ENCODE measurements at regions of chr6 and their contacts with region 1.

Region 1: DNA sequence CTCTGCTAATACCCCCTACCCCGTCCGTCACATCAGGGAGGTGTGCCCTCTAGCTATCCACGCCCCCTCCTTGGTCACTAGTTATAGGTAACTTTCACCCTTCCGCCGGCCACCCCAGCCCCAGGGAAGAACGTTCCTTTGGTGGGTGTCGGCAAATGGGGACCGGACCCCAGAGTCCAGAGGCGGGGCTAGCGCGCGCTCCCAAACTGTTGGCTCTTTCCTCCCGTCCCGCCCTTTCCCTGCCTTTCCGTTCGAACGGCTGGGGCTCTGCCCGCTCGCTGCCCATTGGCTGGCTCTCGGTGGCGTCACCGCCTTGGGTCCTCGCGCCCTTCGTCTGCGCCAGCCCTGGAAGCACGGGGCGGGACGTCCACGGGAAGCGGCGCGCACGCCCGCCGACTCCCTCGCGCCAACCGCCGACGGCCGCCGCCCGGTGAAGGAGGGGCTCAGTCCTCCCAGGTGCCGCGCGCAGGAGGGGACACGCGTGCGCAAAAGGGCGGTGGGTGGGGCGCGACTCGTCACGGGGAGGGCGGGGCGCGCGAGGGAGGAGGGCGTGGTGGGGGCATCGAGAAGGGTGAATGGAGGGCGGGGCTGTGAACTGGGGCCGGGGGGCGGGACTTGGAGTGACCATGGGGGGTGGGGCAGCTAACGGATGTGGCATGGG is 634 bp upstream of the PHF1 start:
- DNase-seq: peak; percentile 98
- ATAC-seq: peak; percentile 74
- H3K4me3 ChIP-seq: peak overlapping the region; percentile 63 to 91 (median 84)
- H3K4me3 Mint-ChIP-seq: peak overlapping the region; percentile 87
- H3K27ac ChIP-seq: peak overlapping the region; percentile 96 to 98
- H3K27ac Mint-ChIP-seq: peak overlapping the region; percentile 94
- H3K4me1 ChIP-seq: peaks cover 37 to 52% of the 10 kb centered on the region in 2 donors
- H3K4me1 Mint-ChIP-seq: peaks cover 47% of the 10 kb centered on the region
- H3K27me3 ChIP-seq: no peaks in the 10 kb centered on the region
- H3K27me3 Mint-ChIP-seq: no peaks in the 10 kb centered on the region
- CTCF ChIP-seq: no peak

Region 2: GRCh38 chr6:32952817-32953739 is 457.1 kb before region 1 on chr6 and contains the start of gene HLA-DMA:
- CTCF ChIA-PET with region 1: no interaction called
- POLR2A ChIA-PET with region 1: no interaction called
- intact Hi-C with region 1: no loop called
- DNase-seq: peak; percentile 97
- ATAC-seq: peak; percentile 91
- H3K4me3 ChIP-seq: peak within 1 kb of the TSS; percentile 72 to 98 (median 93)
- H3K4me3 Mint-ChIP-seq: peak within 1 kb of the TSS; percentile 96
- H3K27ac ChIP-seq: peak within 1 kb of the TSS; percentile 91 to 92
- H3K27ac Mint-ChIP-seq: peak within 1 kb of the TSS; percentile 98
- H3K4me1 ChIP-seq: peaks cover 70 to 84% of the 10 kb centered on the region in 2 donors
- H3K4me1 Mint-ChIP-seq: peaks cover 85% of the 10 kb centered on the region
- H3K27me3 ChIP-seq: no peaks in the 10 kb centered on the region
- H3K27me3 Mint-ChIP-seq: no peaks in the 10 kb centered on the region
- CTCF ChIP-seq: peak; percentile 88
- total RNA-seq, gene HLA-DMA: 554 and 558 TPM in 2 replicates

Region 3: GRCh38 chr6:33299237-33299944 is 110.8 kb before region 1 on chr6:
- CTCF ChIA-PET with region 1: no interaction called
- POLR2A ChIA-PET with region 1: interaction called, 11 read pairs
- intact Hi-C with region 1: loop called (anchors 2 kb)
- DNase-seq: peak; percentile 95
- ATAC-seq: peak; percentile 68
- H3K4me3 ChIP-seq: peak overlapping the region; percentile 71 to 96 (median 79)
- H3K4me3 Mint-ChIP-seq: peak overlapping the region; percentile 99
- H3K27ac ChIP-seq: peak overlapping the region; percentile 86 to 91
- H3K27ac Mint-ChIP-seq: peak overlapping the region; percentile 99
- H3K4me1 ChIP-seq: peaks cover 12 to 24% of the 10 kb centered on the region in 2 donors
- H3K4me1 Mint-ChIP-seq: peaks cover 38% of the 10 kb centered on the region
- H3K27me3 ChIP-seq: no peaks in the 10 kb centered on the region
- H3K27me3 Mint-ChIP-seq: no peaks in the 10 kb centered on the region
- CTCF ChIP-seq: peak; percentile 69

Region 4: GRCh38 chr6:33425668-33426577 is 15.7 kb after region 1 on chr6:
- CTCF ChIA-PET with region 1: interaction called, 6 read pairs
- POLR2A ChIA-PET with region 1: interaction called, 11 read pairs
- intact Hi-C with region 1: loop called (anchors 1 kb)
- DNase-seq: peak; percentile 83
- ATAC-seq: peak; percentile 59
- H3K4me3 ChIP-seq: peak overlapping the region; percentile 48 to 79 (median 62)
- H3K4me3 Mint-ChIP-seq: peak overlapping the region; percentile 92
- H3K27ac ChIP-seq: peak overlapping the region; percentile 78 to 86
- H3K27ac Mint-ChIP-seq: peak overlapping the region; percentile 91
- H3K4me1 ChIP-seq: peaks cover 50 to 56% of the 10 kb centered on the region in 2 donors
- H3K4me1 Mint-ChIP-seq: peaks cover 65% of the 10 kb centered on the region
- H3K27me3 ChIP-seq: no peaks in the 10 kb centered on the region
- H3K27me3 Mint-ChIP-seq: peaks cover 4% of the 10 kb centered on the region
- CTCF ChIP-seq: peak; percentile 25

Region 5: DNA sequence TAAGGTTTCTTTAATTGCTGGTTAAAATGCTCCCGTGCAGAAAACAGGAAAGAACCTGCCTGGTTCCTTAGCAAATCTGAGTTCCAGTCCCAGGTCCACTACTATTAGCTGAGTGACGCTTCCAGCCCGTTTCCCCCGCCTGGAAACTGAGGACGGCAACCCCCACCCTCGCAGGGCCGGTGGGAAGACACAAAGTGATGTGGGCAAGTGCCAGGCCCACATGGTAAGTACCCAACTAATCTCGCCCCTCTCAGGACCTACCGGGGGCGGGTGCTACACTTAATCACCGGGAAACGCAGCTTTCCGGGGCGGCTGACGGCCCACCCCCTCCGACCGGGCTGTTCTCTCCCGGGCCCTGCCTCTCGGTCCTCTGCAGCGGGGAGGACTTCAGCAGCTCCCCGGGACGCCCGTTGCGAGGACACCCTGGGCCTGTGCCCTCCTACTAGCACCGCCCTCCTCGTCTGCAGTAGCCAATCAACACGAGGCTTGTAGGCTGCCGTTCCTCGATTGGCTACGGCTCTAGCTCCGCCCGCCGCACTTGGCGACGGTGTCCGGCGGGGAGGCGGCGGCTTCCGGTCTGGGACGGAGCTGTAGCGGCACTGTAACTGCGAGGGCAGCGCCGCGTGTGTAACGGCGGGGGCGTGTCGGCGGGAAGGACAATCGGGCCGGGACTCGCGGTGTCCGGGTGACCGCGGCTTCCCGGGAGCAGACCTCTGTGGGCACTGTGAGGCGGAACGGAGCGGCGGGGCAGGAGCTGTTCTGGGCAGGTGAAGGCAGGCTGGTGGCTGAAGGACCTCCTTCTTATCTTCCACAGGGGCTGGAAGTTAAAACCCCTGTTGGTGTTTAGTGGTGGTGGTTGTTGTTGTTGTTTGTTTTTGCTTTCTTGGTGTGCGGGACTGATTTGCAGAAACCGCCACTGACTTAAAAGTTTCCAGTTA is 44.1 kb after region 1 on chr6 and contains the start of gene ZBTB9:
- CTCF ChIA-PET with region 1: no interaction called
- POLR2A ChIA-PET with region 1: interaction called, 8 read pairs
- intact Hi-C with region 1: loop called (anchors 1 kb)
- DNase-seq: peak; percentile 94
- ATAC-seq: peak; percentile 100
- H3K4me3 ChIP-seq: peak within 1 kb of the TSS; percentile 77 to 94 (median 81)
- H3K4me3 Mint-ChIP-seq: peak within 1 kb of the TSS; percentile 99
- H3K27ac ChIP-seq: peak within 1 kb of the TSS; percentile 57 to 84
- H3K27ac Mint-ChIP-seq: peak within 1 kb of the TSS; percentile 93
- H3K4me1 ChIP-seq: peaks cover 12 to 21% of the 10 kb centered on the region in 2 donors
- H3K4me1 Mint-ChIP-seq: peaks cover 32% of the 10 kb centered on the region
- H3K27me3 ChIP-seq: no peaks in the 10 kb centered on the region
- H3K27me3 Mint-ChIP-seq: no peaks in the 10 kb centered on the region
- CTCF ChIP-seq: no peak
- total RNA-seq, gene ZBTB9: 10.4 and 11.8 TPM in 2 replicates